Heart left ventricle (tissue), 16 donors: ENCODE measurements at regions of chr4 and their contacts with region 1.

Region 1: GRCh38 chr4:151690164-151690870 is 70.5 kb downstream of the GATB start:
- DNase-seq: no peak
- ATAC-seq: no peak
- H3K4me3 ChIP-seq: no peak overlapping the region
- H3K27ac ChIP-seq: peak overlapping the region in 10 of 12 donors; percentile 38 to 84 (median 70)
- H3K4me1 ChIP-seq: peaks cover 2 to 84% (median 57%) of the 10 kb centered on the region in 12 donors
- H3K27me3 ChIP-seq: no peaks in the 10 kb centered on the region
- CTCF ChIP-seq: no peak
- POLR2A ChIP-seq: no peak

Region 2: GRCh38 chr4:151760712-151761527 is 70.6 kb after region 1 on chr4 and contains the start of gene GATB:
- intact Hi-C with region 1: loop called in 1 of 10 experiments (anchors 5 kb)
- DNase-seq: peak; percentile 94 to 96 (median 94)
- ATAC-seq: peak; percentile 99 to 100 (median 100)
- H3K4me3 ChIP-seq: peak within 1 kb of the TSS; percentile 57 to 91 (median 76)
- H3K27ac ChIP-seq: peak within 1 kb of the TSS; percentile 58 to 85 (median 79)
- H3K4me1 ChIP-seq: peaks cover 0 to 16% (median 7%) of the 10 kb centered on the region in 12 donors
- H3K27me3 ChIP-seq: no peaks in the 10 kb centered on the region
- CTCF ChIP-seq: peak; percentile 44 to 69 (median 54)
- POLR2A ChIP-seq: peak in 1 of 2 donors; percentile 52
- total RNA-seq, gene GATB: 60.7 to 122 (median 83.4) TPM

Region 3: DNA sequence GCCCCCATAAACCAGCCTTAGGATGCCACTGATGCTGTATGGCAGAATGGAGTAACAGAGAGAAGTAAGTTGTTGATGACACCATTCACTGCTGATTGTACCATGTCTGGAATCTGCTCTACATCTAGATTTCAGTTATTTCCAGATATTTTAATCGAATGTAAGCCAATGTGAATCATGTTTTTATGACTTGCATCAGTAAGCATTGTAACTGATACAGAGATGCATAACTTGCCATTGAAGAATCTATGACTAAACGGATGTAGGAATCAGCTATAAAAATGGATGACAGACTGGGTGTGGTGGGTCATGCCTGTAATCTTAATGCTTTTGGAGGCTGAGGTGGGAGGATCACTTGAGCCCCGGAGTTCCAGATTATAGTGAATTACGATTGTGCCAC is 231.5 kb after region 1 on chr4:
- intact Hi-C with region 1: no loop called
- DNase-seq: no peak
- ATAC-seq: no peak
- H3K4me3 ChIP-seq: no peak overlapping the region
- H3K27ac ChIP-seq: no peak overlapping the region
- H3K4me1 ChIP-seq: no peaks in the 10 kb centered on the region
- H3K27me3 ChIP-seq: no peaks in the 10 kb centered on the region
- CTCF ChIP-seq: no peak
- POLR2A ChIP-seq: no peak

Region 4: DNA sequence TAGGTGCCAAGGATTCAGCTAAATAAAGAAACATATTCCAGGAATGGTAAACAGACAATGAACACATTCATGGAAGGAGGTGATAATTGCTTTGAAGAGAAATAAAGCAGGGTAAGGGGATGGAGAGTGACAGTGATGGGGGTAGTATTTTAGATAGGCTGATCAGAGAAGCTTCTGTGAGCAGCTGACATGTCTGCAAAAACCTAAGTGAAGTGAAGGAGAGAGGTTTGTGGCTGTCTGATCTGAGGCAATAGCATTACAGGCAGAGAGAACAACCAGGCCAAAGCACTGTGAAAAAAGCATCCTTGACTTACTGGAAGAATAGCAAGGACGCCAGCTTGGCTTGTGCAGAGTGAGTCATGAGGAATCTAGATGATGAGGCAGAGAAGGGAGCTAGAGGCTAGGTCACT is 342.4 kb after region 1 on chr4:
- intact Hi-C with region 1: loop called in 1 of 10 experiments (anchors 10 kb)
- DNase-seq: peak in 1 of 5 donors; percentile 58
- ATAC-seq: peak; percentile 33 to 85 (median 62)
- H3K4me3 ChIP-seq: no peak overlapping the region
- H3K27ac ChIP-seq: peak overlapping the region in 10 of 12 donors; percentile 20 to 75 (median 54)
- H3K4me1 ChIP-seq: peaks cover 0 to 21% (median 2%) of the 10 kb centered on the region in 12 donors
- H3K27me3 ChIP-seq: no peaks in the 10 kb centered on the region
- CTCF ChIP-seq: no peak
- POLR2A ChIP-seq: no peak